GM18951 (cell line): ENCODE measurements at regions of chr1 and their contacts with region 1.

Region 1: GRCh38 chr1:201890223-201890622 is 1.5 kb downstream of the SHISA4 start:
- POLR2A ChIP-seq: no peak

Region 2: GRCh38 chr1:201419746-201420607 is 470.2 kb before region 1 on chr1:
- in situ Hi-C with region 1: no loop called
- POLR2A ChIP-seq: no peak

Region 3: GRCh38 chr1:201966171-201966570 is 75.9 kb after region 1 on chr1:
- in situ Hi-C with region 1: loop called (anchors 5 kb)
- POLR2A ChIP-seq: no peak